ENCODE measurements at regions of chr19 and their contacts with region 1.

Region 1: DNA sequence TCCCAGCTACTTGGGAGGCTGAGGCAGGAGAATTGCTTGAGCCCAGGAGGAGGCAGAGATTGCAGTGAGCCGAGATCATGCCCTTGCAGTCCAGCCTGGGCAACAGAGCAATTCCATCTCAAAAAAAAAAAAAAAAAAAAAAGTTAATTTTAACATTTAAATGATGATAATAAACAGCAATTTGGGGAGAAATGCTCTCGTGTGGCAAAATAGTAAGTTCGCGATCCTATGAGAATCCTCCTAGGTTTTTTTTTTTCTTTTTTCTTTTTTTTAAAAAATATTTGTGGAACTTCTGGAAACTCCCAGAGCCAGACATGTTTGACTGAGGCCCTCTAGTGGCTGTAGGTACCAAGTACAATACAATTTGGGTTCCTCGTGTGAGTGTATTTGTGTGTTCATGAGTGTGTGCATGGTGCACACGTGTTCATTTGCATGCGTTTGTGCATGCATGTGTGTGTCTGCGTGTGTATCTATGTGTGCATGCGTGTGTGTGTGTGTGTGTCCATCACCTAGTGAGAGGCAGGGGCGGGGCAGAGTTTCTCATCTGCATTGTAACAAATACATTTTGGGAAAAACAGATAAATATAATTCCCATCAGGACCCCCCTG is 31.2 kb downstream of the TMPRSS9 start:
- DNase-seq: peak in 2 of 5 donors; percentile 34 to 35
- ATAC-seq: peak in 3 of 4 donors; percentile 50 to 62 (median 62)
- H3K4me3 ChIP-seq: no peak overlapping the region
- H3K27ac ChIP-seq: no peak overlapping the region
- H3K4me1 ChIP-seq: peaks cover 0 to 5% (median 0%) of the 10 kb centered on the region in 12 donors
- H3K27me3 ChIP-seq: peaks cover 0 to 20% (median 0%) of the 10 kb centered on the region in 9 donors
- CTCF ChIP-seq: peak; percentile 67 to 78 (median 74)
- POLR2A ChIP-seq: no peak

Region 2: DNA sequence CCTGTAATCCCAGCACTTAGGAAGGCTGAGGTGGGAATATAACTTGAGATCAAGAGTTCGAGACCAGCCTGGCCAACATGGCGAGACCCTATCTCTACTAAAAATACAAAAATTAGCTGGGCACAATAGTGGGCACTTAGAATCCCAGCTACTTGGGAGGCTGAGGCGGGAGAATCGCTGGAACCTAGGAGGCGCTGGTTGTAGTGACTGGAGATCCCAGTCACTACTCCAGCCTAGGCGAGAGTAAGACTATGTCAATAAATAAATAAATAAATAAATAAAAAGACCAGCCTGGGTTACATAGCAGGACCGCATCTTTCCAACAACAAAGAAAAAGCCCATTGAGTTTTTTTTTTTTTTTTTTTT is 229.6 kb before region 1 on chr19:
- intact Hi-C with region 1: loop called in 8 of 10 experiments (anchors 2 to 10 kb)
- DNase-seq: no peak
- ATAC-seq: no peak
- H3K4me3 ChIP-seq: no peak overlapping the region
- H3K27ac ChIP-seq: no peak overlapping the region
- H3K4me1 ChIP-seq: peaks cover 2 to 31% (median 21%) of the 10 kb centered on the region in 12 donors
- H3K27me3 ChIP-seq: no peaks in the 10 kb centered on the region
- CTCF ChIP-seq: no peak
- POLR2A ChIP-seq: no peak

Region 3: GRCh38 chr19:2236314-2237050 is 154.7 kb before region 1 on chr19 and contains the starts of genes PLEKHJ1 and SF3A2:
- intact Hi-C with region 1: loop called in 5 of 10 experiments (anchors 1 to 10 kb)
- DNase-seq: peak; percentile 97 to 99 (median 98)
- ATAC-seq: peak; percentile 91 to 95 (median 94)
- H3K4me3 ChIP-seq: peak within 1 kb of the TSS; percentile 72 to 98 (median 94)
- H3K27ac ChIP-seq: peak within 1 kb of the TSS; percentile 92 to 100 (median 99)
- H3K4me1 ChIP-seq: peaks cover 14 to 75% (median 54%) of the 10 kb centered on the region in 12 donors
- H3K27me3 ChIP-seq: no peaks in the 10 kb centered on the region
- CTCF ChIP-seq: peak; percentile 92 to 100 (median 98)
- POLR2A ChIP-seq: peak in 1 of 2 donors; percentile 52
- total RNA-seq, gene PLEKHJ1: 44.6 to 63.2 (median 46.5) TPM
- total RNA-seq, gene SF3A2: 19.2 to 43.9 (median 28.6) TPM

Region 4: DNA sequence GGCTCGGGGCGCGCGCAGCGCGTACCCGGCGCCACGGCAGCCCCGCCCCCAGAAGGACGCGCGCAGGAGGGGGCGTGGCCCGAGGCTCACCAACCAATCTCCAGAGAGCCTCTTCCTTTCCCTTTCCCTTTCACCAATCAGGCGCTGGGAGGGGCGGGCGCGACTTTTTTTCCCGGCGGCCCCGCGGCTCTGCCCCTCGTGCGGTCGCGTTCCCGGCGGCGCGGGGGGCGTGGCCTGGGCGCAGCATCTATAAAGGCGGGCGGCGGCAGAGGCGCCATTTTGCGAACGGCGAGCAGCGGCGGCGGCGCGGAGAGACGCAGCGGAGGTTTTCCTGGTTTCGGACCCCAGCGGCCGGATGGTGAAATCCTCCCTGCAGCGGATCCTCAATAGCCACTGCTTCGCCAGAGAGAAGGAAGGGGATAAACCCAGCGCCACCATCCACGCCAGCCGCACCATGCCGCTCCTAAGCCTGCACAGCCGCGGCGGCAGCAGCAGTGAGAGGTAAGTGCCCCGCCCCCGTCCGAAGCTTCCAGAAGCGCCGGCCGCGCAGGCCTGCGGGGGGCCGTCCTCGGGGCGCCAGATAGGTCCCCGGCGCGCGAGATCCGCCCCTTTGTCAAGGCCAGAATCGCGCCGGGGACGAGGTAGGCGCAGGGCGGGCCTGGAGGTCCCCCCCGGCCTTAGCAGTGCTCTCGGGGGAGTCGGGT is 121.8 kb before region 1 on chr19:
- intact Hi-C with region 1: loop called in 3 of 10 experiments (anchors 5 to 10 kb)
- DNase-seq: peak; percentile 98 to 100 (median 99)
- ATAC-seq: peak; percentile 89 to 92 (median 91)
- H3K4me3 ChIP-seq: peak overlapping the region; percentile 87 to 100 (median 98)
- H3K27ac ChIP-seq: peak overlapping the region; percentile 91 to 100 (median 99)
- H3K4me1 ChIP-seq: peaks cover 9 to 73% (median 42%) of the 10 kb centered on the region in 12 donors
- H3K27me3 ChIP-seq: no peaks in the 10 kb centered on the region
- CTCF ChIP-seq: no peak
- POLR2A ChIP-seq: peak; percentile 100

Region 5: GRCh38 chr19:2274931-2275535 is 116.2 kb before region 1 on chr19:
- intact Hi-C with region 1: loop called in 7 of 10 experiments (anchors 5 to 10 kb)
- DNase-seq: peak; percentile 66 to 79 (median 78)
- ATAC-seq: peak; percentile 33 to 58 (median 42)
- H3K4me3 ChIP-seq: no peak overlapping the region
- H3K27ac ChIP-seq: peak overlapping the region in 8 of 12 donors; percentile 8 to 56 (median 24)
- H3K4me1 ChIP-seq: peaks cover 9 to 53% (median 41%) of the 10 kb centered on the region in 12 donors
- H3K27me3 ChIP-seq: no peaks in the 10 kb centered on the region
- CTCF ChIP-seq: peak; percentile 32 to 67 (median 53)
- POLR2A ChIP-seq: no peak

Region 6: GRCh38 chr19:2282062-2282861 is 109.0 kb before region 1 on chr19 and contains the start of gene PEAK3:
- intact Hi-C with region 1: loop called in 6 of 10 experiments (anchors 5 to 10 kb)
- DNase-seq: peak; percentile 81 to 93 (median 85)
- ATAC-seq: peak; percentile 87 to 96 (median 90)
- H3K4me3 ChIP-seq: peak within 1 kb of the TSS in 11 of 12 donors; percentile 22 to 61 (median 48)
- H3K27ac ChIP-seq: peak within 1 kb of the TSS in 10 of 12 donors; percentile 9 to 82 (median 53)
- H3K4me1 ChIP-seq: peaks cover 0 to 18% (median 10%) of the 10 kb centered on the region in 12 donors
- H3K27me3 ChIP-seq: peaks cover 0 to 22% (median 0%) of the 10 kb centered on the region in 9 donors
- CTCF ChIP-seq: no peak
- POLR2A ChIP-seq: peak in 1 of 2 donors; percentile 10
- total RNA-seq, gene PEAK3: 0.11 to 1.6 (median 0.48) TPM

Region 7: DNA sequence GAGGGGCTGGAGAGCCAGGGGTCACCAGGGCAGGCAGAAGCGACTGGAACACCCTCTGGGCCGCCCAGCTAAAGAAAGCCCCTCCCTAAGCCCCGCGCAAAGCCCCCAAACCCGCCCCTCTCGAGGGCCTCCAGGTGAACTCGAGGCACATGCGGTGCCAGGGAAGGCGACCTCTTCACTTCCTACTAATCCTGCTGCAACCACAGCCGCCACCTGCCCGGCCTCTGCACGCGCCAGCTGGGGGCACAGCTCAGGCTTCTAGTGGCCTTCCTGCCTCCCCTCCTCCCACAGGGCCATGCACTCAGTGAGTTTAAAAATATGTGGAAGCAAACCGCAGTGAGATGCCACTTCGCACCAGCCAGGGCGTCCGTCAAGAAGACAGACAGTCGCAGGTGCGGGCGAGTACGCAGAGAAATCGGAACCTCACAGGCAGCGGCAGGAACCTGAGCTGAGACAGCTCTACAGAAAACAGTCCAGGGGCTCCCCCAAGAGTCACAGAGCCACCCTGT is 55.1 kb after region 1 on chr19:
- intact Hi-C with region 1: no loop called
- DNase-seq: peak in 1 of 5 donors; percentile 59
- ATAC-seq: no peak
- H3K4me3 ChIP-seq: no peak overlapping the region
- H3K27ac ChIP-seq: no peak overlapping the region
- H3K4me1 ChIP-seq: peaks cover 0 to 7% (median 0%) of the 10 kb centered on the region in 12 donors
- H3K27me3 ChIP-seq: no peaks in the 10 kb centered on the region
- CTCF ChIP-seq: no peak
- POLR2A ChIP-seq: no peak